Lower leg skin (tissue), 4 donors: ENCODE measurements at regions of chr5 and their contacts with region 1.

Region 1: DNA sequence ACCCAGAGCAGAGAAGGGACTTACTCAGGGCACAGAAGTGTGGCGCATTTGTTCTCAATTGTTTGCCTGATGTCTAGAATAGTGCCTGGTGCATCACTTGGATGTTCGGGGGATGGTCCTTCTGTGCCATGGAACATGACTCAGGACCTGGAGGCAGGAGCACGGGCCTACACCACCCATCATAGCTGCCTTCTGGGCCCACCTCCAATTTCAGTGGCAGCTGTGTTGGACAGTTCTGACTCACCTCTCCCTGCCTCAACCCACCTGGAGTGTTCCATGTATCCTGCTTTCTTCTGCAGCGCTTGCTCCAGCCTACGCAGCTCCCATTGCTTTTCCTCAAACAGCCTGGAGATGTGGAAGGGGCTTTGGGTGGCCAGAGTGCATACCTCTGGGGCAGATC is 12.5 kb upstream of the CXCL14 start:
- DNase-seq: peak in 1 of 2 donors; percentile 63
- H3K4me3 ChIP-seq: no peak overlapping the region
- CTCF ChIP-seq: no peak
- POLR2A ChIP-seq: no peak

Region 2: GRCh38 chr5:135543485-135544304 is 47.6 kb before region 1 on chr5:
- intact Hi-C with region 1: no loop called
- DNase-seq: peak in 1 of 2 donors; percentile 90
- H3K4me3 ChIP-seq: peak overlapping the region; percentile 19
- CTCF ChIP-seq: no peak
- POLR2A ChIP-seq: no peak

Region 3: DNA sequence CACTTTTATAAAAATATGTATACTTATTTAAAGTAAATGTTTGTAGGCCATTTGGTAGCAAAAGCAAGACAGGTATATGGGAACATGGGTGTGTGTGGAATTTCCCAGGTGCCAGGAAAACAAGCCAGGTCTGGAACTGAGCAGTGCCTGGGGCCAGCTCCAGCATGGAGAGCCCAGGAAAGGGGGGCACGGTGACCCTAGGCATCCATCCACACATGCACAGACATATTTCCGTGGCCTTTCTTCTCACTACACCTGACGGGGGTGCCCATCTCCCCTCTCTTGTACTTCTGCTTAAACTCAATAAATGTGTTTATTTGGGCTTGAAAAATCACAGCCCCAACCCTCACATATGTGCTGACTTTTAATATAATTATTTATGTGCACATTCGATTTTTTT is 18.7 kb after region 1 on chr5:
- intact Hi-C with region 1: loop called (anchors 2 kb)
- DNase-seq: peak in 1 of 2 donors; percentile 79
- H3K4me3 ChIP-seq: no peak overlapping the region
- CTCF ChIP-seq: no peak
- POLR2A ChIP-seq: no peak